ENCODE measurements at regions of chr1 and their contacts with region 1.

Region 1: GRCh38 chr1:207797229-207797961 is 45.5 kb downstream of the CD46 start:
- DNase-seq: peak; percentile 88
- H3K4me3 Mint-ChIP-seq: no peak overlapping the region
- H3K27ac Mint-ChIP-seq: no peak overlapping the region
- H3K4me1 Mint-ChIP-seq: peaks cover 36% of the 10 kb centered on the region
- H3K27me3 Mint-ChIP-seq: no peaks in the 10 kb centered on the region

Region 2: DNA sequence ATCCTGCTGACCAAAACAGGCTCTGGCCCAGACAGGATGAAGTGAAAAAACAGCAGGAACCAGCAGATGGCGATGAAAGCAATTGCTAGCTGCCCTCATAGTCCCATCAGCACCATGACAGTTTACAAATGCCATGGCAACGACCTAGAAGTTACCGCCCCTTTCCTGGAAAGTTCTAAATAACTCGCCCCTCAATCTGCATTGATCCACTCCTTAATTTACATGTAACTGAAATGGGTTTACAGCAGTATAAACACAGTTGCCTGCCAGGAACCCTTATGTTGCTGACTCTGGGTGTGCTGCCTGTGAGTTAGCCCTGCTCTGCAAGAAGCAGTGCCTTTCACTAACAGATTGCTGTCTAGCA is 218.0 kb before region 1 on chr1:
- CTCF ChIA-PET with region 1: interaction called, 19 read pairs
- DNase-seq: peak; percentile 65
- H3K4me3 Mint-ChIP-seq: no peak overlapping the region
- H3K27ac Mint-ChIP-seq: no peak overlapping the region
- H3K4me1 Mint-ChIP-seq: peaks cover 5% of the 10 kb centered on the region
- H3K27me3 Mint-ChIP-seq: peaks cover 23% of the 10 kb centered on the region

Region 3: DNA sequence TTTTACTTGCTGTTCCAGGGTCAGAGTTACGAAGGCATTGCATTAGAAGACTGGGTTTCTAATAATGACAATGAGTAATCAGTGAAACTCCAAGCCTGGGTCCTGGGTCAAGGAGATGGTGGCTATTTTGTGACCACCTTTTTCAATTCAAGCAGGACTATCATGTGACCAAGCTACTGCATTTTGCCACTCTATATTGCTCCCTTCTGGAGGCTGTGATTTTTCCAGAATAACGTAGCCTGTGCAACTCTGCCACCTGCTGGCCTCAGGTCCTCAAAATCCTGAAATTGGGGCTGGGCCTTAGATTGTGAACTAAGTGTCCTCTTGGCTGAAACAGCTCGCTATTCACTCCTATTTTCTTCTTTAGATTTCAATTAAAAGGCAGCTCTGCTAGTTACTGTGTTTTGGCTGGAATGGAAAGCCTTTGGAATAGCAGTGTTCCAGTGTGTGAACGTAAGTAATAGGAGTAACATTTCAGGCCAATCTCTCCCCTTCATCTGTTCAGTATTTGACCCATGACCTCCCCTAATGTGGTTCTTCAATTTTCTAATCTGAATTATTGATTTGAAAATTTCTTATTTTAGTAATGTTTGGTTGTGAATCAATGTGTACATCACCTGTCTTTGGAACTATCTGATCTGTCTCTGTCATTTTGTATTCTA is 98.4 kb before region 1 on chr1:
- CTCF ChIA-PET with region 1: interaction called, 10 read pairs
- DNase-seq: peak; percentile 57
- H3K4me3 Mint-ChIP-seq: no peak overlapping the region
- H3K27ac Mint-ChIP-seq: no peak overlapping the region
- H3K4me1 Mint-ChIP-seq: no peaks in the 10 kb centered on the region
- H3K27me3 Mint-ChIP-seq: peaks cover 26% of the 10 kb centered on the region

Region 4: DNA sequence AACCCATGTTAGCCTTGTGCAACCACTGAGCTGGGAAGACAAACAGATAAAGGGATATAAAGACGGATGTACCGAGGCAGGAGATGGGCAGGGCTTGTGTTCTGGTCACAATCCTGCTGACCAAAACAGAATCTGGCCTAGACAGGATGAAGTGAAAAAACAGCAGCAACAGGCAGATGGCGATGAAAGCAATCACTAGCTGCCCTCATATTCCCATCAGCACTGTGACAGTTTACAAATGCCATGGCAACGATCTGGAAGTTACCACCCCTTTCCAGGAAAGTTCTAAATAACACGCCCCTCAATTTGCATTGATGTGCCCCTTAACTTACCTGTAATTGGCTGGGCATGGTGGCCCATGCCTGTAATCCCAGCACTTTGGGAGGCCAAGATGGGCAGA is 86.1 kb before region 1 on chr1:
- CTCF ChIA-PET with region 1: interaction called, 27 read pairs
- DNase-seq: peak; percentile 26
- H3K4me3 Mint-ChIP-seq: no peak overlapping the region
- H3K27ac Mint-ChIP-seq: no peak overlapping the region
- H3K4me1 Mint-ChIP-seq: no peaks in the 10 kb centered on the region
- H3K27me3 Mint-ChIP-seq: peaks cover under 1% of the 10 kb centered on the region

Region 5: DNA sequence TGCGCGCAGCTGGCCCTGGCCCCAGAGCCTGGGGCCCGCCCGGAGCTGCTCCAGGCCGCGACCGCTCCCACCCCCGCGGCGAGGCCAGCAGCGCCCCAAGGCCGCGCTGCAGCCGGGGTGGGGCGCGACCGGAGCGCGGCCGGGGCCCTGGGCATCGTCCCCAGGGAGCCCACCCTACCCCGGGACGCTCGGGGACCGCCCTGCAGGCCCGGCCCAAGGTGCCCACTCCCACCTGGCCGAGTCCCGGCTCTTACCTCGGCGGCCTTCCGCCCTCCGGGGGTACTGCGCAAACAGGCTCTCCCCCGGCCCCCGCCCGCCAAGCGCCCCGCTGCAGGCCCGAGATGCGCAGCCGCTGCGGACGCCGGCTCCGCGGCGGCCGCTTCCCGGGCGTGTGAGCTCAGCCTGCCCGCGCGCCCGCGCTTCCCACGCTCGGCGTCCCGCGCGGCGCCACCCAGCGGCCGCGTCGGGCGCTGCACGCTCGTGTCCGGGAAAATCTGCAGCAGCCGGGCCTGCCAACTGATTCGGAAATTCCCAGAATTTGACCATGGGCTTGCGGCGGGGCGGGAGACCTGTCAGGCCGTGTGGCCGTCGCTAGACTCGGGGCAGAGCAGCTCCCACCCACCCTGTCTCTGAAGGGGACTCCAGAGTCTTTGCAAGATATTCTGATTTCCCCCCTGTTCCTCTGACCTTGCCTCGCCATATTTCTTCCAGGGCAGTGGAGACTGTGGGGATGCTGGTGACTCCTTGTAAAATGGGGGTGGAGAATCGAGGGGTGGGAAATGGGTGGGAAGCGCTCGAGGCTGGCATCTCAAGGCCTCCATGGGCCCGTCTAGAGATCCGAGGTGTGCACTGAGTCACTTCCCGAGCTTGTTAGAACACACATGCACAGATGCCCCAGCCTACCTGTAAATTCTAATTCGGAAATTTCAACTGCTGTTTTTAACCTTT is 71.7 kb after region 1 on chr1:
- CTCF ChIA-PET with region 1: interaction called, 11 read pairs
- DNase-seq: peak; percentile 68
- H3K4me3 Mint-ChIP-seq: peak overlapping the region; percentile 95
- H3K27ac Mint-ChIP-seq: peak overlapping the region; percentile 97
- H3K4me1 Mint-ChIP-seq: peaks cover 83% of the 10 kb centered on the region
- H3K27me3 Mint-ChIP-seq: no peaks in the 10 kb centered on the region

Measured in activated naive CD4-positive, alpha-beta T cell treated with anti-CD3 and anti-CD28 coated beads, Interleukin-2, amount 10 ng/mL, durations not matched to agents 7 days and 5 days (primary cell).